Aorta (tissue), 5 donors: ENCODE measurements at regions of chr4 and their contacts with region 1.

Region 1: GRCh38 chr4:55345980-55346850 is at the start of gene SRD5A3:
- DNase-seq: peak; percentile 89 to 96
- ATAC-seq: peak; percentile 98
- H3K4me3 ChIP-seq: peak within 1 kb of the TSS; percentile 62 to 76
- H3K27ac ChIP-seq: peak within 1 kb of the TSS; percentile 68 to 84
- H3K4me1 ChIP-seq: no peaks in the 10 kb centered on the region
- H3K27me3 ChIP-seq: no peaks in the 10 kb centered on the region
- total RNA-seq, gene SRD5A3: 8.4 to 11.7 TPM

Region 2: DNA sequence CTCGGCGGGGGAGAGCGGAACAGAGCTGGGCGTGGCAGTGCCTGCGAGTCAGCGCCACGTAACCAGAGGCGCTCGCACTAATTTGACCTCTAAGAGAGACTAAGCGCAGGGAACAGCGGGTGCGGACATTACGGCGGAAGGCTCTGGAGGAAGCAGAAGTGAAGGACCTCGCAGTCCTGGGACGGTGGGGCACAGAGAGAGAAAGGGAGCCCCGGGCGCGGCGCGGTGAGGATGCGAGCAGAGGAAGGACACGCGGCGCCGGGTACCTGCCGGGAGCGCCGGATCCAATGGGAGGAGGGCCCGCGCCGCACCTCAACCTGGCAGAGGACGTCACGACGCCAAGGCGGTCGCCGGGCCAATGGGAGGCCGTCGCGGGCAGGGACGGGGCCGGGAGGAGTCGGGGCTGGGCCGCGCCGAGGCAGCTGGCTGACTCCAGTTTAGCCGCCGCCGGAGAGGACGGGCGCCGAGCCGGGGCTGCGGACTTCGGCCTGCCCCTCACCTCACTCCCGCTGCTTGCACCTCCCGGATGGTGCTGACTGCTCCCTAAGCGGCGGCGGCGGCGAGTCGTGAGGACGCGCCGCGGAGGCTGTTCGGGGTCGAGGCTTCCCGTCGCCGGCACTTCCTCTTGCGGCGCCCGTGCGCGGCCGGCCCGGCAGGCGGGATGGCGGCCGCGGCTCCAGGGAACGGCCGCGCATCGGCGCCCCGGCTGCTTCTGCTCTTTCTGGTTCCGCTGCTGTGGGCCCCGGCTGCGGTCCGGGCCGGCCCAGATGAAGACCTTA is 49.5 kb after region 1 on chr4 and contains the start of gene TMEM165:
- intact Hi-C with region 1: loop called (anchors 1 to 5 kb)
- DNase-seq: peak; percentile 95 to 97
- ATAC-seq: peak; percentile 96
- H3K4me3 ChIP-seq: peak within 1 kb of the TSS; percentile 97 to 99
- H3K27ac ChIP-seq: peak within 1 kb of the TSS; percentile 95 to 98
- H3K4me1 ChIP-seq: no peaks in the 10 kb centered on the region
- H3K27me3 ChIP-seq: no peaks in the 10 kb centered on the region
- total RNA-seq, gene TMEM165: 183 to 204 TPM

Region 3: DNA sequence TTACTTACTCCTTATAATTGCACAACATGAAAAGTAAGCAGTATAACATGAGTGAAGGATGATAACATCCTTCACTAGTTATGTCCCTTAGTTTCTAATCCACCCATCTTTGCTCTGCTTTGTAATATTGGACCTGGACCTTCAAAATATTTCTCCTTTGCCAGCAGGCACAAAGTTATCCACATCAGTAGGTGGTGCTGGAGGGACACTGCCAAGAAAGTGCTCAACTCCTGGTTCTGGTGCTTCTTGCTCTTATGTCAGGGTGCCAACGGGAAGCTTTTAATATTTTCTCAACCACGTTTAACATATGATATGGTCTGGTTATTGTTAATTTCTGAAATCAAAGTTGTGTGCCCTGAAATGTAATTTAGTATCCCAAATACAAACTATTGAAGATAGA is 98.6 kb after region 1 on chr4:
- intact Hi-C with region 1: loop called in 1 of 2 experiments (anchors 10 kb)
- DNase-seq: no peak
- ATAC-seq: no peak
- H3K4me3 ChIP-seq: no peak overlapping the region
- H3K27ac ChIP-seq: no peak overlapping the region
- H3K4me1 ChIP-seq: no peaks in the 10 kb centered on the region
- H3K27me3 ChIP-seq: no peaks in the 10 kb centered on the region

Region 4: GRCh38 chr4:55546756-55547465 is 200.7 kb after region 1 on chr4 and contains the start of gene CLOCK:
- intact Hi-C with region 1: loop called (anchors 2 to 5 kb)
- DNase-seq: peak; percentile 92 to 96
- ATAC-seq: peak; percentile 93
- H3K4me3 ChIP-seq: peak within 1 kb of the TSS; percentile 94 to 99
- H3K27ac ChIP-seq: peak within 1 kb of the TSS; percentile 65 to 71
- H3K4me1 ChIP-seq: no peaks in the 10 kb centered on the region
- H3K27me3 ChIP-seq: no peaks in the 10 kb centered on the region
- total RNA-seq, gene CLOCK: 32.4 to 36.8 TPM

Region 5: GRCh38 chr4:55561889-55562288 is 215.7 kb after region 1 on chr4:
- intact Hi-C with region 1: no loop called
- DNase-seq: no peak
- ATAC-seq: no peak
- H3K4me3 ChIP-seq: no peak overlapping the region
- H3K27ac ChIP-seq: no peak overlapping the region
- H3K4me1 ChIP-seq: no peaks in the 10 kb centered on the region
- H3K27me3 ChIP-seq: no peaks in the 10 kb centered on the region

Region 6: GRCh38 chr4:55853484-55854046 is 507.4 kb after region 1 on chr4 and contains the start of gene EXOC1:
- intact Hi-C with region 1: loop called in 1 of 2 experiments (anchors 10 kb)
- DNase-seq: peak; percentile 99 to 100
- ATAC-seq: peak; percentile 99
- H3K4me3 ChIP-seq: peak within 1 kb of the TSS; percentile 78 to 94
- H3K27ac ChIP-seq: peak within 1 kb of the TSS; percentile 3 to 89
- H3K4me1 ChIP-seq: peaks cover 2 to 4% of the 10 kb centered on the region in 2 donors
- H3K27me3 ChIP-seq: no peaks in the 10 kb centered on the region
- total RNA-seq, gene EXOC1: 40.1 to 50.4 TPM

Region 7: DNA sequence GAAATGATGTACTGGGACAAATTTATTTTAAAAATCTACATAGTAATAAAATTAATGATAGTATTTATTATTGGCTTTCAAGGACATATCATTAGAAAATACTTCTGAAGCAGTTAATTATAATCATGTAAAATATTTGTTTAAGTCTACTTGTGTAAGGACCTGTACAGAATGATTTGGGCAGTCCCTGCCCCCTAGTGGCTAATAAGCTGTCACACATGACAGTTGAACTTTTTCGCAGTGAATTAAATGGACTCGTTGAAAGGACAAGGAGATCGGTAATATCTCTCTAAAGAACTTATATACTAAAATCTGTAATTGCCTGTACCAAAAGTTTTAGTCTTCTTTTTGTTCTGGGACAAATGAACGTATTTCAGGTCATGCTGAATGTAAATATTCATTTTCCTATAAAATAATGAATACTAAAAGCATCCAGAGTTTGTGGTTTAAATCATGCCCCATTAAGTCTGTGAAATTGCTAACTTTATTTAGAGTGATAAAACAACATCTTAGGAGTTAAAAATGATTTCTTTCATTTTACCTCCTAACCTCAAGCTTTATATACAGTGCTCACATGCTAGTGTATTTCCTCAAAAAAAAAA is 520.9 kb after region 1 on chr4:
- intact Hi-C with region 1: loop called in 1 of 2 experiments (anchors 5 kb)
- DNase-seq: no peak
- ATAC-seq: peak; percentile 87
- H3K4me3 ChIP-seq: no peak overlapping the region
- H3K27ac ChIP-seq: no peak overlapping the region
- H3K4me1 ChIP-seq: no peaks in the 10 kb centered on the region
- H3K27me3 ChIP-seq: no peaks in the 10 kb centered on the region